Heart left ventricle (tissue), 16 donors: ENCODE measurements at regions of chr12 and their contacts with region 1.

Region 1: GRCh38 chr12:104201238-104202001 is 14.2 kb upstream of the TXNRD1 start:
- DNase-seq: peak in 1 of 5 donors; percentile 14
- ATAC-seq: peak in 3 of 4 donors; percentile 72 to 86 (median 72)
- H3K4me3 ChIP-seq: no peak overlapping the region
- H3K27ac ChIP-seq: no peak overlapping the region
- H3K4me1 ChIP-seq: peaks cover 0 to 6% (median 0%) of the 10 kb centered on the region in 12 donors
- H3K27me3 ChIP-seq: no peaks in the 10 kb centered on the region
- CTCF ChIP-seq: peak; percentile 58 to 92 (median 82)
- POLR2A ChIP-seq: no peak

Region 2: DNA sequence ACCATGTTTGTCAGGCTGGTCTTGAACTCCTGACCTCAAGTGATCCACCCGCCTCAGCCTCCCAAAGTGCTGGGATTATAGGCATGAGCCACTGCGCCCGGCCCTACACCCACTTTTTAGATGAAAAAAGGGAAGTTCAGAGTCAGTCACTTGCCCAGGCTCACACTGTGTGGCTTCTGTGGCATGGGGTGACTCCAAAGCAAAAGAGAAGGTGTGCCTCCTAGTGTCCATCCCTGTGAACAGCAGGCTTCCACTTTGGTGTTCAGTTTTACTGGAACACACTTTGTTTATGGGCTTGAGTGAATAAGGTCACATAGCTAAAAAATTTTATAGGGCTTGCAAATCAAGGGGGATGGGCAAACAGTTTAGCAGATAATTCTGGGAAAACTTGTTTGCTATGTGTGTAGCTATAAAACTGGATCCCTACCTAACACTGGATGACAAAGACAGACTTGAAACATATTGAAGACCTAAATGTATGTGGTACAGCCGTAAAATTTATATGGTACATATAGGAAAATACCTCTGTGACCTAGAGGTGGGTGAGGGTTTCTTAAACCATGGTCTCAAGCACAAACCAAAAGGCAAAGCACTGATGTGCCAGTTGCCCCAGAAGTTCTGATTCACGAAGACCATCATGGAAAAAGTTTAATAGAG is 157.1 kb after region 1 on chr12:
- intact Hi-C with region 1: loop called (anchors 1 to 5 kb)
- DNase-seq: peak in 4 of 5 donors; percentile 52 to 59 (median 54)
- ATAC-seq: peak; percentile 71 to 81 (median 78)
- H3K4me3 ChIP-seq: no peak overlapping the region
- H3K27ac ChIP-seq: no peak overlapping the region
- H3K4me1 ChIP-seq: peaks cover 0 to 8% (median 0%) of the 10 kb centered on the region in 12 donors
- H3K27me3 ChIP-seq: no peaks in the 10 kb centered on the region
- CTCF ChIP-seq: peak; percentile 70 to 87 (median 84)
- POLR2A ChIP-seq: no peak

Region 3: DNA sequence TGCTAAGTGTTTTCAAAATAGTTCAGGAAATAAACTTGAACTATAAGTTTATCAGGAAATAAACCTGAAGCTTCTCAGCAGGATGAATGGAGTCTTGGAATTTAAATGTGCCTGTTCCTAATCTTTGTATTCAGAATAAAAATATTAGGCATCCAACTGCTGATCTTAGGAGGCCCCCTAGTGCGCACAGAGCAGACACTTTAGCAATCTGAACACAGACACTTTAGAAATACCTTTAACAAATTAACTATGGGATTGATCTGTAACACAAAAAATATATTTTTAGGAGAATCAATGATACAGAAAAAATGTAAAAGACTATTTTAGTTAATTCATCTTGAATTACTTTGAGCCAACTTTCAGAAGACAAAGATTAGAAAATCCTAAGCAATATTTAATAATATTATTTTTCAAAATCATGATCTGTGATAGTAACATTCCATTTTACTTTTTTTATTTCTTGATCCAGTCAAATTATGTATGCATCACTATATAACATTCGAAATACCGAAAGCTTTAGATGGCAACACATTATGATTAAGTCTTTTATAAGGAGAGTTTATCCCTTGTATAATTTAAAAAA is 675.8 kb after region 1 on chr12:
- intact Hi-C with region 1: loop called in 3 of 10 experiments (anchors 5 to 10 kb)
- DNase-seq: peak in 3 of 5 donors; percentile 27 to 55 (median 33)
- ATAC-seq: peak in 3 of 4 donors; percentile 67 to 77 (median 76)
- H3K4me3 ChIP-seq: no peak overlapping the region
- H3K27ac ChIP-seq: no peak overlapping the region
- H3K4me1 ChIP-seq: peaks cover 0 to 3% (median 0%) of the 10 kb centered on the region in 12 donors
- H3K27me3 ChIP-seq: no peaks in the 10 kb centered on the region
- CTCF ChIP-seq: peak; percentile 37 to 85 (median 76)
- POLR2A ChIP-seq: no peak